PC-9 (cell line): ENCODE measurements at regions of chr11 and their contacts with region 1.

Region 1: DNA sequence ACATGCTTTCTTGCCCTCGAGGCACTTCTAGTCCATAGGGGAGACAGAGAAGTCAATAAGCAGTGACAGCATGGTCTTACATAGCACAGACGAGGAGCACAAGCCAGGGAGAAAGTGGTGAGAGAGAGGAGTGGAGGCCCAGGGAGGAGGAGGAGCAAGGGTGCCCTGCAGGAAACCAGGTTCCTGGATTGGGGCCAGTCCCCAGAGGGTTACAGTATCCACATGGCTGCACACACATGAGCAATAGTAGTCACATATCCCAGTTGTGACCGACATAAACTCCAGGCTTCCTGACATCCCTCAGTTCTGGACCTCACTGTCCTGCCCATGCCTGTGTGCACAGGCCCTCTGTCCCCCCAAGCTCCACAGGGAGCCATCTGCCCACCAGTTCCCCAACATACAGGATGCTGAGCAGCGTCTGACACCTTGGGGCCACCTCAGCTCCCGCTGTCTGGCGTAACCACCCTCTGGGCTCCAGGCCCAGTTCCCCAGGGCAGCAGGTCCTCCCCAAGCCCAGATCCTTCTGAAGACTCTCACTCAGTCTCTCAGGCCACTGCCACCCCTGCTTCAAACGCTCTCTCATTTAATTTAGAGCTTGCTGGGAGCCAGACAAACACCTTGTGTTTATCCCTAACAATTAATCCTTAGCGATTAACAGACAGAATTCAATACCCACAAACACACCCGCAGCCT is 53.7 kb downstream of the DSCAML1 start:
- DNase-seq: no peak
- H3K4me3 ChIP-seq: no peak overlapping the region
- H3K27ac ChIP-seq: no peak overlapping the region
- H3K4me1 ChIP-seq: no peaks in the 10 kb centered on the region
- H3K27me3 ChIP-seq: peaks cover 100% of the 10 kb centered on the region
- CTCF ChIP-seq: no peak

Region 2: GRCh38 chr11:117600976-117601708 is 142.1 kb before region 1 on chr11:
- CTCF ChIA-PET with region 1: no interaction called
- POLR2A ChIA-PET with region 1: interaction called, 26 read pairs
- intact Hi-C with region 1: no loop called
- DNase-seq: no peak
- H3K4me3 ChIP-seq: no peak overlapping the region
- H3K27ac ChIP-seq: no peak overlapping the region
- H3K4me1 ChIP-seq: no peaks in the 10 kb centered on the region
- H3K27me3 ChIP-seq: peaks cover 99% of the 10 kb centered on the region
- CTCF ChIP-seq: no peak

Region 3: GRCh38 chr11:117678658-117679406 is 64.4 kb before region 1 on chr11:
- CTCF ChIA-PET with region 1: no interaction called
- POLR2A ChIA-PET with region 1: no interaction called
- intact Hi-C with region 1: no loop called
- DNase-seq: no peak
- H3K4me3 ChIP-seq: no peak overlapping the region
- H3K27ac ChIP-seq: no peak overlapping the region
- H3K4me1 ChIP-seq: no peaks in the 10 kb centered on the region
- H3K27me3 ChIP-seq: peaks cover 100% of the 10 kb centered on the region
- CTCF ChIP-seq: no peak

Region 4: GRCh38 chr11:117766576-117766975 is 23.3 kb after region 1 on chr11:
- CTCF ChIA-PET with region 1: no interaction called
- POLR2A ChIA-PET with region 1: no interaction called
- intact Hi-C with region 1: no loop called
- DNase-seq: no peak
- H3K4me3 ChIP-seq: no peak overlapping the region
- H3K27ac ChIP-seq: no peak overlapping the region
- H3K4me1 ChIP-seq: no peaks in the 10 kb centered on the region
- H3K27me3 ChIP-seq: peaks cover 92% of the 10 kb centered on the region
- CTCF ChIP-seq: no peak